OCI-LY7 (cell line): ENCODE measurements at regions of chr15 and their contacts with region 1.

Region 1: GRCh38 chr15:40323239-40323952 is at the start of gene INAFM2:
- DNase-seq: peak; percentile 94
- H3K4me3 ChIP-seq: peak within 1 kb of the TSS; percentile 65
- H3K27ac ChIP-seq: no peak within 1 kb of the TSS
- H3K4me1 ChIP-seq: peaks cover 6% of the 10 kb centered on the region
- CTCF ChIP-seq: peak; percentile 66
- total RNA-seq, gene INAFM2: 1.1 and 3.3 TPM in 2 replicates

Region 2: GRCh38 chr15:40002295-40002694 is 321.1 kb before region 1 on chr15:
- CTCF ChIA-PET with region 1: no interaction called
- POLR2A ChIA-PET with region 1: no interaction called
- intact Hi-C with region 1: no loop called
- DNase-seq: no peak
- H3K4me3 ChIP-seq: no peak overlapping the region
- H3K27ac ChIP-seq: no peak overlapping the region
- H3K4me1 ChIP-seq: no peaks in the 10 kb centered on the region
- CTCF ChIP-seq: no peak

Region 3: GRCh38 chr15:40054605-40055545 is 268.5 kb before region 1 on chr15:
- CTCF ChIA-PET with region 1: no interaction called
- POLR2A ChIA-PET with region 1: no interaction called
- intact Hi-C with region 1: loop called (anchors 5 kb)
- DNase-seq: peak; percentile 86
- H3K4me3 ChIP-seq: peak overlapping the region; percentile 22
- H3K27ac ChIP-seq: peak overlapping the region; percentile 31
- H3K4me1 ChIP-seq: peaks cover 62% of the 10 kb centered on the region
- CTCF ChIP-seq: no peak

Region 4: DNA sequence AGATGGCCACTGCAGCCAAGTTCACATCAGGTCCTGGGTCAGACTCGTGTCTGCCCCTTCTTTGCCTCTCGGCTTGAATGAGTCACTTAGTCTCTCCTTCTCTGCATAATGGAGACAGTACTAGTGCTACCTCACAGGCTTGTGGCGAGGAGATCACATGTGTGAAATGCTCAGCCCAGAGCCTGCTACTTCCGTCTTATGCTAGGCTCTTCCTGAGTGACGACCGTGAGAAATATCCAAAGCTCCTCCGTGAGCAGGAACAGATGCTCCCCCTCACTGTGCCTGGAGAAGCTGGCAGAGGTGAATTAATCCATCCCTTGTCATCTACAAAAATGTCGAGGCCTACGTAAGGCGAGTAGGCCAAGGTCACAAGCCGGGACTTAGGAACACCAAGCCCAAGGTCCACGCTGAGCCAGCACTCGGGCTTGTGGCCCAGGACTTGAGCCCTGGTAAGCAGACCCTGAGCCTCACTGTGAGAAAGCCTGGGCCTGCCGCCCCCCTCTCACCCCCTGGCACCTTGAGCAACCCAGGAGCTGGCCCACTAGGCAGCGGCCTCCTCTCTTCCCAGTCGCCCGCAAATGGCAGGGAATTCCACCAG is 66.7 kb before region 1 on chr15:
- CTCF ChIA-PET with region 1: no interaction called
- POLR2A ChIA-PET with region 1: no interaction called
- intact Hi-C with region 1: no loop called
- DNase-seq: no peak
- H3K4me3 ChIP-seq: no peak overlapping the region
- H3K27ac ChIP-seq: no peak overlapping the region
- H3K4me1 ChIP-seq: no peaks in the 10 kb centered on the region
- CTCF ChIP-seq: no peak

Region 5: GRCh38 chr15:40338041-40338657 is 14.8 kb after region 1 on chr15:
- CTCF ChIA-PET with region 1: interaction called, 5 read pairs
- POLR2A ChIA-PET with region 1: interaction called, 5 read pairs
- intact Hi-C with region 1: loop called (anchors 1 kb)
- DNase-seq: peak; percentile 81
- H3K4me3 ChIP-seq: no peak overlapping the region
- H3K27ac ChIP-seq: no peak overlapping the region
- H3K4me1 ChIP-seq: peaks cover 13% of the 10 kb centered on the region
- CTCF ChIP-seq: peak; percentile 94

Region 6: GRCh38 chr15:40421246-40422157 is 98.1 kb after region 1 on chr15:
- CTCF ChIA-PET with region 1: no interaction called
- POLR2A ChIA-PET with region 1: interaction called, 3 read pairs
- intact Hi-C with region 1: loop called (anchors 1 kb)
- DNase-seq: peak; percentile 58
- H3K4me3 ChIP-seq: no peak overlapping the region
- H3K27ac ChIP-seq: no peak overlapping the region
- H3K4me1 ChIP-seq: no peaks in the 10 kb centered on the region
- CTCF ChIP-seq: peak; percentile 80

Region 7: DNA sequence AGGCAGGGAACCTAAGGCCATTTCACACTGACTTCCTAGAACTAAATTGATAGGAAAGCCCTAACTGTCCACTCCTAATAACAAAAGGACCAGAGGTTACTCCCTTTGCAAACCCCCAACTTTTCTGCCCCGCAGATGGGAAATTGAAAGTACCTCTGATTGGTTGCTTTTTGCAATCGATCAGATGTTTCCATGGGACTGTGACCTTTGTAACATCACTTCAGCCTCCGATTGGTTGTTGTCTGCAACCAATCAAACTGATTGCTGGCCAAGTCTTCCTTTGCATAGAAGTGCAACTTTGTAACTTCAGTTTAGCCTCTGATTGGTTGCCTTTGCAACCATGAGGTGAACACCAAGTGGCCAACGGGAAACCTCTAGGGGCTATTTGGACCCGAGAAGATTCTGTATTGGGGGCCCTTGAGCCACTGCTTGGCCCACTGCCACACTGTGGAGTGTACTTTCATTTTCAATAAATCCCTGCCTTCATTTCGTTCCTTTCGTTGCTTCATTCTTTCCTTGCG is 259.4 kb after region 1 on chr15:
- CTCF ChIA-PET with region 1: no interaction called
- POLR2A ChIA-PET with region 1: no interaction called
- intact Hi-C with region 1: no loop called
- DNase-seq: no peak
- H3K4me3 ChIP-seq: no peak overlapping the region
- H3K27ac ChIP-seq: no peak overlapping the region
- H3K4me1 ChIP-seq: no peaks in the 10 kb centered on the region
- CTCF ChIP-seq: no peak

Region 8: GRCh38 chr15:40878785-40879184 is 555.4 kb after region 1 on chr15:
- CTCF ChIA-PET with region 1: no interaction called
- POLR2A ChIA-PET with region 1: no interaction called
- intact Hi-C with region 1: no loop called
- DNase-seq: no peak
- H3K4me3 ChIP-seq: no peak overlapping the region
- H3K27ac ChIP-seq: no peak overlapping the region
- H3K4me1 ChIP-seq: peaks cover 8% of the 10 kb centered on the region
- CTCF ChIP-seq: no peak